OCI-LY7 (cell line): ENCODE measurements at regions of chr19 and their contacts with region 1.

Region 1: GRCh38 chr19:7197760-7198696 is 96.2 kb downstream of the INSR start:
- DNase-seq: peak; percentile 97
- H3K4me3 ChIP-seq: peak overlapping the region; percentile 75
- H3K27ac ChIP-seq: peak overlapping the region; percentile 72
- H3K4me1 ChIP-seq: peaks cover 42% of the 10 kb centered on the region
- CTCF ChIP-seq: no peak

Region 2: DNA sequence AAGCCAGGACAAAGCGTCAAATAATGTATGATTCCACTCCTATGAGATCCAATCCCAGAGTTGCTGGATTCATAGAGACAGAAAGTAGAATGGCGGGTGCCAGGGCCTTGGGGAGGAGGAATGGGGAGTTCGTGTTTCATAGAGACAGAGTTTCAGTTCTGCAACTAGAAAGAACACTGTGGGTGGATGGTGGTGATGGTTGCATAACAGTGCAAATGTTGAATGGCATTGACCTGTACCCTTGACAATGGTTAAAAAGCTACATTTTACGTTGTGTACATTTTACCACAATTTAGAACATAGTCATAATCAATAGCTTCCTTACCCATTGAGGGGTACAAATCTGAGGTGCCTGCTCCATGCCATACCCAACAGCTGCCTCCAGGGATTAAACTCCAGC is 210.2 kb before region 1 on chr19:
- CTCF ChIA-PET with region 1: no interaction called
- POLR2A ChIA-PET with region 1: no interaction called
- intact Hi-C with region 1: no loop called
- DNase-seq: no peak
- H3K4me3 ChIP-seq: no peak overlapping the region
- H3K27ac ChIP-seq: no peak overlapping the region
- H3K4me1 ChIP-seq: no peaks in the 10 kb centered on the region
- CTCF ChIP-seq: no peak

Region 3: GRCh38 chr19:7149956-7150705 is 47.9 kb before region 1 on chr19:
- CTCF ChIA-PET with region 1: no interaction called
- POLR2A ChIA-PET with region 1: interaction called, 3 read pairs
- intact Hi-C with region 1: loop called (anchors 2 kb)
- DNase-seq: no peak
- H3K4me3 ChIP-seq: no peak overlapping the region
- H3K27ac ChIP-seq: no peak overlapping the region
- H3K4me1 ChIP-seq: no peaks in the 10 kb centered on the region
- CTCF ChIP-seq: no peak

Region 4: DNA sequence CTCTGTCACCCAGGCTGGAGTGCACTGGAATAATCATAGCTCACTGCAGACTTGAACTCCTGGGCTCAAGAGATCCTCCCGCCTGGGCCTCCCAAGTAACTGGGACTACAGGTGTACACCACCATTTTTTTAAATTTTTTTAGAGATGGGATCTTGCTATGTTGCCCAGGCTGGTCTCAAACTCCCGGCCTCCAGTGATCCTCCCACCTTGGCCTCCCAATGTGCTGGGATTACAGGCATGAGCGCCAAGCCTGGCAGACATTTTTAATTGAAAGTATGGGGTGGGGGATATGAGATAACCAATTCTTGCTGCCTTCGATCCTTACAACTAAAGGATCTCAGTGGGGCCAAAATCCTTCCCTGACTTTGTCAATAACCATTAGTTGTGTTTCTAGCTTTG is 36.7 kb before region 1 on chr19:
- CTCF ChIA-PET with region 1: no interaction called
- POLR2A ChIA-PET with region 1: no interaction called
- intact Hi-C with region 1: no loop called
- DNase-seq: no peak
- H3K4me3 ChIP-seq: no peak overlapping the region
- H3K27ac ChIP-seq: no peak overlapping the region
- H3K4me1 ChIP-seq: no peaks in the 10 kb centered on the region
- CTCF ChIP-seq: no peak

Region 5: GRCh38 chr19:7242601-7243258 is 44.7 kb after region 1 on chr19:
- CTCF ChIA-PET with region 1: no interaction called
- POLR2A ChIA-PET with region 1: no interaction called
- intact Hi-C with region 1: loop called (anchors 2 kb)
- DNase-seq: peak; percentile 62
- H3K4me3 ChIP-seq: peak overlapping the region; percentile 60
- H3K27ac ChIP-seq: peak overlapping the region; percentile 83
- H3K4me1 ChIP-seq: peaks cover 58% of the 10 kb centered on the region
- CTCF ChIP-seq: no peak

Region 6: GRCh38 chr19:7415163-7415858 is 217.3 kb after region 1 on chr19:
- CTCF ChIA-PET with region 1: no interaction called
- POLR2A ChIA-PET with region 1: no interaction called
- intact Hi-C with region 1: no loop called
- DNase-seq: no peak
- H3K4me3 ChIP-seq: no peak overlapping the region
- H3K27ac ChIP-seq: no peak overlapping the region
- H3K4me1 ChIP-seq: peaks cover 10% of the 10 kb centered on the region
- CTCF ChIP-seq: no peak